ENCODE measurements at regions of chr1 and their contacts with region 1.

Region 1: GRCh38 chr1:26993237-26994019 is at the start of gene TRNP1:
- DNase-seq: peak in 2 of 3 donors; percentile 47 to 61
- H3K4me3 ChIP-seq: peak within 1 kb of the TSS; percentile 9 to 68 (median 38)
- H3K27ac ChIP-seq: no peak within 1 kb of the TSS
- H3K4me1 ChIP-seq: peaks cover 2 to 34% (median 34%) of the 10 kb centered on the region in 4 experiments
- H3K27me3 ChIP-seq: peaks cover 3 to 59% (median 26%) of the 10 kb centered on the region in 5 experiments

Region 2: DNA sequence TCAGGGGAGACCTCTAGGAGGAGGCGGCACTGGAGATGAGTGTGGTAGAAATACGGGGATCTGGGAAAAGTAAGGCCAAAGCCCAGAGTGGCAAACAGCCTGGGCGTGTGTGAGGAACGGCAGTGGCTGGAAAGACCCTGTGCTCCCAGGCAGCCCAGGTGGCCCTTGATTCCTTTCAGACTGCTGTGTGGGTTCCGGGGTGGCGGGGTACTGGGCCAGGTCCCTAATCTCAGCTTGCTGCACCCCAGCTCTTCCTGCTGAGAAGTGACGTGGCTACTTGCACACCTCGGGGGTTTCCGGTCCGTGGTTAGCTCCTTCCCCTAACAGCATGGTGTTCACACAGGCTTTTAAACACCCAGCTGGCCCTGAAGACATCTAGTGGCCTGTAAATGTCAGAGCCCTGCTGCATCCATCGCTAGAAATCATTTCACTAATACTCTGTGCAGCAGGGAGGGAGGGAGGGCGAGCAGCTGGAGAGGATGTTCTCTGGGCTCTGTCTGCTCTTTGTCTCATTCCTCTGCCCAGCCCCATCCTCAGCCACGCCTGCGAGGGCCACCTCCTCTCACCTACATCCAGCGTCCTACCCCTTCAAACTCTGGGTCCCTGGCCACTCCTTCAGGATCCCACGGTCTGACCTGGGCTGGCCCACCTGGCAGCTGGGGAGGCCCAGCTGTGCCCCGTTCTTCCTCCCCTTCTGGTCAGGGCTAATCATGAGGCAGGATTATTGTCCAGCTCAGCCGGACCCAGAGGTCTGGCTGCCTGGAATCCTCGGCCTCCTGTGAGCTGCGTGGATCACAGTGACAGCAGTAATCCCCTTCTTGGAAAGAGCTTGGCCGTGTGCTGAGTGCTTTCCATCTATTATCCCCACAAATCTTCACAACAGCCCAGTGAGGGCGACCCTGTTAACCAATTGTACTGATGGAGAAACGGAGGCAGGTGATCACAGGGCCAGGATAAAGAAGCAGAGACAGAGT is 159.7 kb before region 1 on chr1:
- CTCF ChIA-PET with region 1: no interaction called
- POLR2A ChIA-PET with region 1: no interaction called
- DNase-seq: peak; percentile 96 to 99 (median 97)
- H3K4me3 ChIP-seq: peak overlapping the region in 4 of 7 experiments; percentile 21 to 53 (median 36)
- H3K27ac ChIP-seq: peak overlapping the region; percentile 70 to 85
- H3K4me1 ChIP-seq: peaks cover 13 to 48% (median 33%) of the 10 kb centered on the region in 4 experiments
- H3K27me3 ChIP-seq: no peaks in the 10 kb centered on the region

Region 3: DNA sequence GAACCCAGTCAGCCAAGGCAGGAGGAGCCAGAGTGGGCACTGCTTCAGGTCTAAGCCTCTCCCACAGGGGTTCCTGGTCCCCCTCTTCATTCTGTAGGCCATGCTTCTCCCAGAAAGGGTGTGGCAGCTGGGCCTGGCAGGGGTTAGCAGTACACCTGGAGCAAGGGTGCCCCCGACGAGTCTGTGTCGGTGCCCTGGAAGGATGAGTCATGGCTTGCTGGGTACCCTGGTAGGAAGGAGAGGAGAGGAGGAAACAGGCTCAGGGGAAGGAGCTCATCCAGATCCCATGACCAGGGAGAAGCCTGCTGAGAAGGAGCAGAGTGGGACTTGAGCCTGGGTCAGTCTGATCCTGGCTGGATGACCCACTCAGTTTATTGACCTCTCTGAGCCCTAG is 43.5 kb before region 1 on chr1:
- CTCF ChIA-PET with region 1: no interaction called
- POLR2A ChIA-PET with region 1: no interaction called
- DNase-seq: no peak
- H3K4me3 ChIP-seq: no peak overlapping the region
- H3K27ac ChIP-seq: no peak overlapping the region
- H3K4me1 ChIP-seq: no peaks in the 10 kb centered on the region
- H3K27me3 ChIP-seq: no peaks in the 10 kb centered on the region

Region 4: GRCh38 chr1:26970810-26971209 is 22.6 kb before region 1 on chr1:
- CTCF ChIA-PET with region 1: interaction called, 61 read pairs
- POLR2A ChIA-PET with region 1: interaction called, 3 read pairs
- DNase-seq: no peak
- H3K4me3 ChIP-seq: no peak overlapping the region
- H3K27ac ChIP-seq: no peak overlapping the region
- H3K4me1 ChIP-seq: peaks cover 0 to 13% (median 13%) of the 10 kb centered on the region in 4 experiments
- H3K27me3 ChIP-seq: peaks cover 0 to 5% (median 0%) of the 10 kb centered on the region in 5 experiments

Region 5: DNA sequence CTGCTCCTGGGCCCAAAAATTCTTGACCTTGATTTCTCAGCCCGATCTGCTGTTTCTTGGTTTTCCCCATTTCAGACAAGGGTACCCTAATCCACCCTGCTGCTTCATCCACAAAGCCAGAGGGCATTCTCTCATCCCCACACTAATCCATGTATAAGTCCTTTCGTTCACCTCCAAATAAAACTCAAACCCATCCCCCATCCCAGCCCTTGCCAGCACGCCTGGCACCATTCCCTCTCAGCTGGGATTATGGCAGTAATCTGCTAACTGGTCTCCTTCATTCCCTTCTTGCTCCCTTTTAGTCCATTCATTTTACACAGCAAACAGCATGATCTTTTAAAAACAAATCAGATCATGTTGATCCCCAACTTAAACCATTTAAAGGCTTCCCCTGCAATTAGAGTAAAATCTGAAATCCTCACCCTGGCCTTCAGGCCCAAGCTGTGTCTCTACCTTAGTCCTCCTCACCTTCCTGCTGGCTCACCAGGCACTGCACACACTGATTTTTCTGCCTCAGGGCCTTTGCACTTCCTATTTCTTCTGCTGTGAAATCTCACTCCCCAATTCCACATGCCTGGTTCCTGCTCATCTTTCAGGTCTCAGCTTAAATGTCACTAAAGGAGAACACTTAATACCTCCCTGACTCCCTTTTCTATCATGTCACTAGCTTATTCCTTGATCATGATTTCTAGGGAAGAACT is 12.1 kb before region 1 on chr1:
- CTCF ChIA-PET with region 1: interaction called, 36 read pairs
- POLR2A ChIA-PET with region 1: no interaction called
- DNase-seq: no peak
- H3K4me3 ChIP-seq: no peak overlapping the region
- H3K27ac ChIP-seq: no peak overlapping the region
- H3K4me1 ChIP-seq: peaks cover 0 to 5% (median 0%) of the 10 kb centered on the region in 4 experiments
- H3K27me3 ChIP-seq: peaks cover 0 to 2% (median 0%) of the 10 kb centered on the region in 5 experiments

Region 6: DNA sequence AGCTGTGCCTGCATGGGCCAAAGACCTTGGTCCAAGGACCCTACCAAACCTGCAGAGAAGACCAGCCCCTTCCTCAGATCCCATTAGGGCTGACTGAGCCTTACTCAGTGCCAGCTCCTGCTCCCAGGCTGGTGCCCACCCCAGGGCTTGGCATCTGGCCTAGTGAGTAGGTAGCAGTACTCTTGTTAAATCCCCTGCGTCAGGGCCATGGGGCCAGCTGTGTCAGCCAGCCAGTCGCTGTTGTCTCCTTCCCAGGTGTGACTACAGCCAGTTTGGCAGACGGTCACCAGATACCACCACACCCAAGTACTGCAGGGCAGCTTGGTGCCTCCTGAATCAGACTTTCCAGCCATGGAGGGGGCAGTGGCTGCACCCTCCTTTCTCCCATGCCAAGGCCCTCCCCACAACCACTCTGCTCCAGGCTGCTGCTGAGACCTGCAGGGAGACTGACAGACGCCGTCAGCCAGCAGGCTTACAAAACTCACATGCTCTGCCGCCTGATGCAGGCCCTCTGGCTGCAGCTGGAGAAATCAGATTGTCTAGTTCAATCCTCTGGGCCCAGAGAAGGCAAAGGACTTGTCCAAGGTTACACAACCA is 16.3 kb after region 1 on chr1:
- CTCF ChIA-PET with region 1: interaction called, 25 read pairs
- POLR2A ChIA-PET with region 1: no interaction called
- DNase-seq: no peak
- H3K4me3 ChIP-seq: no peak overlapping the region
- H3K27ac ChIP-seq: no peak overlapping the region
- H3K4me1 ChIP-seq: peaks cover 0 to 20% (median 10%) of the 10 kb centered on the region in 4 experiments
- H3K27me3 ChIP-seq: peaks cover 0 to 14% (median 4%) of the 10 kb centered on the region in 5 experiments

Region 7: DNA sequence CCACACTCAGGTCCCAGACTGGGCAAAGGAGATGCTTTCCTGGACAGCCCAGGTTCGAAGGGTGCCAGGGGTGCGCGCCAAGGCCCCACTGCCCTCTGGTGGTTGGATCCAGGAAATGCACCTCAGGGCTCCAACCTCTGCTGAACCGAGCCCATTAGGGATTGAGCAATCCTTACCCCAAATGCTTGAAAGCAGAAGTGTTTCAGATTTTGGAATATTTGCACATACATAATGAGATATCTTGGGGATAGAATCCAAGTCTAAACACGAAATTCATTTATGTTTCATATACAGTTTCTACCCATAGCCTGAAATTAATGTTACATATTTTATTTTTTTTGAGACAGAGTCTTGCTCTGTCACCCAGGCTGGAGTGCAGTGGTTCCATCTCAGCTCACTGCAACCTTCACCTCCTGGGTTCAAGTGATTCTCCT is 104.1 kb after region 1 on chr1:
- CTCF ChIA-PET with region 1: interaction called, 27 read pairs
- POLR2A ChIA-PET with region 1: no interaction called
- DNase-seq: peak; percentile 81 to 91 (median 88)
- H3K4me3 ChIP-seq: no peak overlapping the region
- H3K27ac ChIP-seq: no peak overlapping the region
- H3K4me1 ChIP-seq: peaks cover 0 to 26% (median 24%) of the 10 kb centered on the region in 4 experiments
- H3K27me3 ChIP-seq: no peaks in the 10 kb centered on the region